ACHN (cell line): ENCODE measurements at regions of chr13 and their contacts with region 1.

Region 1: DNA sequence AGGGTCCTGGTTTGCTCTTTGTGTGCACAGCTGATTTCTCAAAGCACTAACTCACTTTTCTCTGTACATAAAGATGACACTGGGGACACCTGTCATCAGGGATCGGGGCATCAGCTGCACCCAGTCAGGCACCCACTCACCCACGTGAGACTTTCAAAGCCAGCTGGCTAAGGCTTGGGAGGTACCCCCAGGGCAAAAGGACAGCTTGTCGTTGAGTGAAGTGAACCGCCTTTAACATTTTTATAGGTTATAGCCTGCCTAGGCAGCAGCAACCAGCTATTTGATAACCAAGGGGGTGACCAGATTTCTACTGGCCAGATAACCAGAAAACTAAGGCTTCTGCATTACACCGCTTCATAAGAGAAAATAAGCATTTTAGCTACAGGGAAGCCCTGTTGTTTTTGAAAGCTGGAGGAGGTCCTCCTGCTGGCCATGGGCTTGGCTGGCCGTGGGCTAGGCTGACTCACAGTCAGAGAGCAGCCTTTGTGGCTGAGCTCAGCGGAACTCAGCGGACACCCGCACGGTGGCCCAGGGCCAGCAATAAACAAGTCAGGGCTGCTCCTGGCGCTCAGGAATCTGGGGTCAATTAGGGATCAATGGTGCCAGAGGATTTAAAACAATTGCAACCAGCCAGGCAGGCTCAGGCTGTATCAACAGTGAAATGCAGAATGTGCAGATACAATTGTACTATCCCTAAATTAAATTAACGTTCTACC is 57.1 kb downstream of the ALOX5AP start:
- DNase-seq: peak; percentile 89

Region 2: DNA sequence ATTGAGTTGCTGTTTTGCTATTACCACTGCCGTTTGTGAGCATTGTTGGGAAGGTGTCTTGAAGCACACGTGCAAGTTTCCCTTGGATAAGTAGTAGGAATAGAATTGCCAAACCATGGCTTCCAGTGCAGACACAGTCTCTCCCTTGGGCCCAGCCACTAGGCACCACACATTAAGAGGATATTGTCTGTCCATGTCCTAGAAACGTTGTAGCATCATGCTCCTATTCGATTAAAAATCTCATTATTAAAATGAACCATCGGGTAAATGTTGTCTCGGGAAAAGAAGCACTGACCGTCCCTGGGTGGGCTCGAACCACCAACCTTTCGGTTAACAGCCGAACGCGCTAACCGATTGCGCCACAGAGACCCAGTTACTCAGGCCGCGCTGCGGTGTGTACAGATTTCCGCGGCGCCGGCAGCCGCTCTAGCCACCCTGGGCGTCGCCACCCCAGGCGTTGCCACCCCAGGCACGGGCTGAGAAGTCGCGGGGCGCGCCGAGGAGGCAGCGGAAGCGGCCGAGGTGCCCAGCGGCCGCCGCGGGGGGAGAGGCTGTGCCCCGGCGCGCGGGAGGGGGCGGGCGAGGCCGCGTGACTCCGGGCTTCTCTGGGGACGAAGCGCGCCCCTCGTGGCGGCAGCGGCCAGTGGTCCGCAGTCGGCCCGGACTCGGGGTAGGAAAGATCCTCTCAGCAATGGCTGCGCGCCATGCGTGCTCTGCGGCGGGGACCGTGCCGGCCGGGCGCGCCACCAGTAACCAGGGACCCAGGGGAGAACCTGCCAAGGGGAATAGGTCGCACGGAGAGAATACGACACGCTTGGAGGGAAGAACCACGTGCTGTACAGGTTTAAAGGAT is 118.5 kb before region 1 on chr13:
- in situ Hi-C with region 1: loop called (anchors 25 kb)
- DNase-seq: peak; percentile 86

Region 3: GRCh38 chr13:30932481-30933353 is 140.3 kb after region 1 on chr13 and contains the start of gene TEX26:
- in situ Hi-C with region 1: no loop called
- DNase-seq: no peak

Region 4: GRCh38 chr13:31090991-31091531 is 298.6 kb after region 1 on chr13:
- in situ Hi-C with region 1: no loop called
- DNase-seq: no peak